ENCODE measurements at regions of chr2 and their contacts with region 1.

Region 1: DNA sequence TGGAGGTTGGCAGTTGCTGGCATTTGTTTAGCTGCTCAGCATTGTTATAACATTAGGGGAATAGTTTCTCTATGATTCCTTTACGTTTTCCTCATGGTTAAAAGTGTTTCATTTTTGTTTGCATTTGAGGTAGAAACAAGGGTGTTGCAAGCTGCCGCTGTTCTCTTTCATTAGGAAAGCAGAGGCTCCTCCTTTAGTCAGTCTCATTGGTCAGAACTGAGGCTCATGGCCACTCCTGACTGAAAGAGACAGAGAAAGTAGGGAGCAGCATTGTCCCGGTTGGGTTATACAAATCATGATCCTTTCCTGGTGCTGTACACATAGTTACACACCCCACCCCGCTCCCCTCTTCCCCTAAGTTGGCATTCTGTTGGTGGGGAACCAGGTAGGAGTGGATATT is 59.8 kb upstream of the PTH2R start:
- DNase-seq: no peak
- H3K4me3 ChIP-seq: no peak overlapping the region
- H3K27ac ChIP-seq: no peak overlapping the region
- H3K4me1 ChIP-seq: no peaks in the 10 kb centered on the region
- H3K27me3 ChIP-seq: no peaks in the 10 kb centered on the region
- CTCF ChIP-seq: no peak
- POLR2A ChIP-seq: no peak

Region 2: GRCh38 chr2:208294482-208295024 is 52.2 kb before region 1 on chr2:
- intact Hi-C with region 1: loop called (anchors 10 kb)
- DNase-seq: no peak
- H3K4me3 ChIP-seq: no peak overlapping the region
- H3K27ac ChIP-seq: peak overlapping the region in 4 of 8 donors; percentile 20 to 61 (median 46)
- H3K4me1 ChIP-seq: peaks cover 0 to 46% (median 18%) of the 10 kb centered on the region in 6 donors
- H3K27me3 ChIP-seq: no peaks in the 10 kb centered on the region
- CTCF ChIP-seq: no peak
- POLR2A ChIP-seq: no peak